Kidney (tissue), 22 donors: ENCODE measurements at regions of chr7 and their contacts with region 1.

Region 1: GRCh38 chr7:136009488-136010079 is 32.4 kb upstream of the MTPN start:
- DNase-seq: peak in 2 of 5 donors; percentile 63 to 74
- H3K4me3 ChIP-seq: no peak overlapping the region
- H3K27ac ChIP-seq: no peak overlapping the region
- H3K4me1 ChIP-seq: no peaks in the 10 kb centered on the region
- H3K27me3 ChIP-seq: no peaks in the 10 kb centered on the region
- CTCF ChIP-seq: peak; percentile 56

Region 2: GRCh38 chr7:135801045-135801693 is 208.4 kb before region 1 on chr7:
- intact Hi-C with region 1: loop called (anchors 5 kb)
- DNase-seq: peak in 3 of 5 donors; percentile 28 to 83 (median 77)
- H3K4me3 ChIP-seq: peak overlapping the region in 2 of 3 donors; percentile 32 to 38
- H3K27ac ChIP-seq: no peak overlapping the region
- H3K4me1 ChIP-seq: peaks cover 0 to 13% (median 4%) of the 10 kb centered on the region in 3 donors
- H3K27me3 ChIP-seq: no peaks in the 10 kb centered on the region
- CTCF ChIP-seq: peak; percentile 88

Region 3: GRCh38 chr7:136163340-136163801 is 153.8 kb after region 1 on chr7:
- intact Hi-C with region 1: no loop called
- DNase-seq: no peak
- H3K4me3 ChIP-seq: no peak overlapping the region
- H3K27ac ChIP-seq: no peak overlapping the region
- H3K4me1 ChIP-seq: no peaks in the 10 kb centered on the region
- H3K27me3 ChIP-seq: no peaks in the 10 kb centered on the region
- CTCF ChIP-seq: no peak